Transverse colon (tissue), 4 donors: ENCODE measurements at regions of chr15 and their contacts with region 1.

Region 1: GRCh38 chr15:100170291-100171210 is 171.2 kb downstream of the ADAMTS17 start:
- DNase-seq: no peak
- H3K4me3 ChIP-seq: no peak overlapping the region
- H3K27ac ChIP-seq: peak overlapping the region in 1 of 4 donors; percentile 8
- H3K4me1 ChIP-seq: peaks cover 0 to 3% (median under 1%) of the 10 kb centered on the region in 4 donors
- H3K27me3 ChIP-seq: no peaks in the 10 kb centered on the region
- CTCF ChIP-seq: no peak
- EP300 ChIP-seq: no peak
- POLR2A ChIP-seq: no peak

Region 2: DNA sequence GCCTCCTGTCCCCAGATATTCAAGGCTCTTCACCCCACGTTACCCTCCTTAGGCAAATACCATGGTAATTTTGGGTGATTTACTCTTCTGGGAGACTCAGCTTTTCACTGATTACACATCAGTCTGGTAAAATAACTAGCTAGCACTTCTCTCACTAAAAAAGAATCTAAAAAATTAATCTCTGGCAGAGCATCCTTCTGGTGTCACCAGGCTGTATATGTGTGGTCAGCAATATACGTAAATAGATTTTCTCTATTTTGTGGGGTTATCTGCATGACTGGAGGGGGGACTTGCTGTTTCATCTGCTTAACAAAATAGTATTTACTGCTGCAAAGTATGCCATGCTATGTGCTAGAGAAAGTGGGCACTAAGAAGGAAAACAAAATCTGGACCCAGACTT is 874.2 kb before region 1 on chr15:
- in situ Hi-C with region 1: no loop called
- intact Hi-C with region 1: loop called (anchors 5 kb)
- DNase-seq: no peak
- H3K4me3 ChIP-seq: no peak overlapping the region
- H3K27ac ChIP-seq: peak overlapping the region in 2 of 4 donors; percentile 7 to 21
- H3K4me1 ChIP-seq: peaks cover 0 to 4% (median 0%) of the 10 kb centered on the region in 4 donors
- H3K27me3 ChIP-seq: no peaks in the 10 kb centered on the region
- CTCF ChIP-seq: no peak
- EP300 ChIP-seq: no peak
- POLR2A ChIP-seq: no peak